Esophagus muscularis mucosa (tissue), 4 donors: ENCODE measurements at regions of chr12 and their contacts with region 1.

Region 1: GRCh38 chr12:17866802-17867201 is 223.2 kb downstream of the RERGL start:
- DNase-seq: no peak
- H3K4me3 ChIP-seq: no peak overlapping the region
- H3K27ac ChIP-seq: no peak overlapping the region
- H3K4me1 ChIP-seq: no peaks in the 10 kb centered on the region
- H3K27me3 ChIP-seq: no peaks in the 10 kb centered on the region
- CTCF ChIP-seq: no peak
- EP300 ChIP-seq: no peak
- POLR2A ChIP-seq: no peak

Region 2: DNA sequence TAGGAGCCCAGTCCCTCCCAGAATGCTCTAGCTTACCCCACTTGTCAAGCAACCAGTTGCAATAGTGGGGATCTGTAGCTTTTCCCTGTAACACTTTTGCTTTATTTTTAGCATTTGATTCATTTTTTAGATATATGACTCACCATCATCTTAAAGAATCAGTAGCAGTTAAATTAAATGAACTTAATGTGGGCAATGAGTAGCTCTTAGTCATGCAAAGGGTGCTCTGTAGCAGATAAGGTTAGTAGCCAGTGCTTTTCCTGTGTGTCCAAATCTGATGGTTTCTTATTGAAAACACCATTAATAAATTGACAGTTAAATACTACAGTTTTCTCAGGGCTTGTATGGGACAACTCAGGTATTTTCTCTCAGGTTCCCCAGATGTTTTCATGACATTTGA is 88.6 kb before region 1 on chr12:
- intact Hi-C with region 1: loop called (anchors 2 kb)
- DNase-seq: no peak
- H3K4me3 ChIP-seq: no peak overlapping the region
- H3K27ac ChIP-seq: no peak overlapping the region
- H3K4me1 ChIP-seq: no peaks in the 10 kb centered on the region
- H3K27me3 ChIP-seq: no peaks in the 10 kb centered on the region
- CTCF ChIP-seq: no peak
- EP300 ChIP-seq: no peak
- POLR2A ChIP-seq: no peak